ENCODE measurements at regions of chr1 and their contacts with region 1.

Region 1: DNA sequence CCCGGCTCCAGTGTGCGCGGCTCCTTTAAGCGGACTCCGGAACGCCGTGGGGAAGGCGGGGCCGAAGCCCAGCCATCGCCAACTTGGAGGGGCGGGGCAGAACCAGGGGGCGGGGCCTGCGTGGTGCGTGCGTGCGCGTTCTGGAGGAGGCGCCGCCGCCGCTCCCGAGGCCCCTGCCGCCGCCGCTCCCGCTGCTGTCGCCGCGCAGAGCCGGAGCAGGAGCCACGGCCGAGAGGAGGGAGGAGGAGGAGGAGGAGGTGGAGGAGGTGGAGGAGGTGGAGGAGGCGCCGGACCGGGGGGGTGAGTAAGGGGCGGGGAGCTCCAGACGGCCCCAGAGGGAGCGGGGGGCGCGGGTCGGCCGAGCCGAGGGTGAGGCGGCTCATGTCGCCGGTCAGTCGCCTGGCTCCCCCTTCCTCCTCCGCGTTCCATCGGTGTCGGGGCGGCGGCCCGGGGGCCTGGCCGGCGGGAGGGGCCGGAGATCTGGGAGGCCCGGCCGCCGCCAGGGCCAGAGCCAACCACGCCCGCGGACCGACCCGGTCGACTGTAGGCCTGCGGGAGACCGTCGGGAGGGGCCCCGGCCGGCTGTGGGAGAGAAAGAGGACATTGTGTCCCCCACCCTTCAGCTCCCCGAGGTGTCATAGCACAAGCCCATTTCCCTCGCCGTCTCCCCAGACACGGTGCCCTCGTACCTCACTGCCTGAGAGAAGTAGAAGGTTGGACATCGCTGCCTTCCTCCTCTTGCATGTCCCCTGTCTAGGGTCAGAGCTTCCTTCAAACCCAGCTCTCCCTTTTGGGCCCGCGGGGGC is at the start of gene RAP1A:
- DNase-seq: peak; percentile 97
- ATAC-seq: peak; percentile 79
- H3K4me3 Mint-ChIP-seq: peak within 1 kb of the TSS; percentile 99
- H3K27ac Mint-ChIP-seq: peak within 1 kb of the TSS; percentile 96
- H3K4me1 Mint-ChIP-seq: peaks cover 63% of the 10 kb centered on the region
- H3K27me3 Mint-ChIP-seq: no peaks in the 10 kb centered on the region
- CTCF ChIP-seq: no peak
- total RNA-seq, gene RAP1A: 197 to 198 TPM

Region 2: DNA sequence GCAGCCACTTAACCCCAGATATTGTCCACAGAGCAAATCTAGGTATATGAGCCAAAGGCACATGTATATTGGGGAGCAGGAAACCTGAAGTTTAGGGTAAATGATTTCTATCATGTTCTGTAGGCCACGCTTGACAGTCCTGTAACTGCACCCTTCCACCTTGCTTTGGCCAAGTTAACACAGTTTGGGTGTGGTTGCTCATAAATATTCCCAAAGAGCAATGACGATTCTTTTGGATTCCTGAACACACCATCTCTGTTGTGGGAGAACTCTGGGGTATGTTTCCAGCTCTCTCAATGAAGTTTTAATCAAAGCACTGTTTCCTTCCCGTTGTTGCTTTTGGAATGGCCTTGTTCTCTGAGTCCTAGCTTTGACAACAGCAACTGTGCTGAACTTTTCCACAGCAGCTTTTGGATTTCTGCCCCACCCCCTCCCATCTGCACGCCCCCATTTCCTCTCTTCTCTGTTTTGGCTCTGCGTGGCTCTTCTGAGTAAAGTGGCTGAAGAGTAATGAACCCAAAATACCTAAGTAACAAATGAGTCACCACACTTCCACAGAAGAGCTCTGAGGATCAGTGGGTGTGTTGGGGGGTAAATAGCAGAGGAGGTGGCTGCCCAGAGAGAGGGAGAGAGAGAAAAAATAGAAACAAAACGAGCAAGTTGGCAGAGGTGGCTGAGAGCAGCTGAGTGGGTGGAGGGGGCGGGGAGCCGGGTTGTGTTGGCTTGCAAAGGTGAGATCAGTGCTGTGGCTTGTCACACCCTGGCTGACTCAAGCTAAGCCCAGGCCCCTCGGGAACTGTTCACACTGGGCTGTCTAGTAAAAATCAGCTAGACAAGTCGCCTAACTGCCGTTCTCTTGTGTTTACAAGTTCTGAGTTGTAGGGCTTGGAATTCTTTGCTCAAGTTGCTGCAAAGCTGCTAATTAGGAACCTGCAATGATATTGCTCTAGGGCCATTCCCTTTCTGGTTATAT is 27.2 kb before region 1 on chr1:
- CTCF ChIA-PET with region 1: interaction called, 77 read pairs
- POLR2A ChIA-PET with region 1: interaction called, 176 read pairs
- intact Hi-C with region 1: loop called (anchors 2 kb)
- DNase-seq: peak; percentile 100
- ATAC-seq: peak; percentile 90
- H3K4me3 Mint-ChIP-seq: peak overlapping the region; percentile 57
- H3K27ac Mint-ChIP-seq: peak overlapping the region; percentile 91
- H3K4me1 Mint-ChIP-seq: peaks cover 76% of the 10 kb centered on the region
- H3K27me3 Mint-ChIP-seq: no peaks in the 10 kb centered on the region
- CTCF ChIP-seq: no peak

Region 3: DNA sequence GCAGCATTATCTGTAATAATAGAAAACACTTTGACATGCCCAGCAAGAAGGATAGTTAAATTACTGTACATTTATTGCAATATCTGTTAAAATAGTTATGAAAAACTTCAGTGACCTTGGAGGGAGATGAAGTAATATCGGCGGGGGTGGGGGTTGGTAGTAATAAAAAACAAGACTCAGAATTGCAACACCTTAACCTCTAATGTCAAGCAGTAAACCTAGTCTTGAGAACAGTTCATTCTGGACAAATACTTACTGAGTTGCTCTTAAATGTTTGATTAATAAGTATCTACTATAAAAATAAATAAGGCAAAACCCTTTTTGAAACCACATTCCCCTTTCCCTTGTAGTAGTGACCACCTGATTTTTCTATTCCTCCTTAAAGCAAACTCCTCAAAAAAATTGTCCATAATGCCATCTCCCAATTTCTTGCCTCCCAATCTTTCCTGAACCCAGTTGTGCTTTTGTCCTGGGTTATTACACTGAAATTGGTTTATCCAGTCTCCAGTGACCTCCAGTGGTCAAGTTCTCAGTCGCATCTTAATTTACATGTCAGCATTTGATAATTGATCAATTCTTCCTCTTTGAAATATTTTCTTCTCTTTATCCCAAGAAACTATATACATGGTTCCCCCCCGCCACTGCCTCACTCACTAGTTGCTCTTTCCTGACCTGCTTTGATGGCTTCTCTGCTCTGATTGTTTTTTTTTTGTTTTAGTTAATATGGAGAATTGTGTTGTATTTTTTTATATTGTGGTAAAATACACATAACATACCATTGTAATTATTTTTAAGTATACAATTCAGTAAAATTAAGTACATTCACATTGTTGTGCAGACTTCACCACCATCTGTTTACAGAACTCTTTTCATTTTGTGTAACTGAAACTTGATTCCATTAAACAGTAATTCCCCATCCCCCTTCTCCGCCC is 36.5 kb after region 1 on chr1:
- CTCF ChIA-PET with region 1: no interaction called
- POLR2A ChIA-PET with region 1: interaction called, 3 read pairs
- intact Hi-C with region 1: loop called (anchors 5 kb)
- DNase-seq: peak; percentile 27
- ATAC-seq: no peak
- H3K4me3 Mint-ChIP-seq: no peak overlapping the region
- H3K27ac Mint-ChIP-seq: no peak overlapping the region
- H3K4me1 Mint-ChIP-seq: peaks cover 53% of the 10 kb centered on the region
- H3K27me3 Mint-ChIP-seq: no peaks in the 10 kb centered on the region
- CTCF ChIP-seq: peak; percentile 56

Region 4: DNA sequence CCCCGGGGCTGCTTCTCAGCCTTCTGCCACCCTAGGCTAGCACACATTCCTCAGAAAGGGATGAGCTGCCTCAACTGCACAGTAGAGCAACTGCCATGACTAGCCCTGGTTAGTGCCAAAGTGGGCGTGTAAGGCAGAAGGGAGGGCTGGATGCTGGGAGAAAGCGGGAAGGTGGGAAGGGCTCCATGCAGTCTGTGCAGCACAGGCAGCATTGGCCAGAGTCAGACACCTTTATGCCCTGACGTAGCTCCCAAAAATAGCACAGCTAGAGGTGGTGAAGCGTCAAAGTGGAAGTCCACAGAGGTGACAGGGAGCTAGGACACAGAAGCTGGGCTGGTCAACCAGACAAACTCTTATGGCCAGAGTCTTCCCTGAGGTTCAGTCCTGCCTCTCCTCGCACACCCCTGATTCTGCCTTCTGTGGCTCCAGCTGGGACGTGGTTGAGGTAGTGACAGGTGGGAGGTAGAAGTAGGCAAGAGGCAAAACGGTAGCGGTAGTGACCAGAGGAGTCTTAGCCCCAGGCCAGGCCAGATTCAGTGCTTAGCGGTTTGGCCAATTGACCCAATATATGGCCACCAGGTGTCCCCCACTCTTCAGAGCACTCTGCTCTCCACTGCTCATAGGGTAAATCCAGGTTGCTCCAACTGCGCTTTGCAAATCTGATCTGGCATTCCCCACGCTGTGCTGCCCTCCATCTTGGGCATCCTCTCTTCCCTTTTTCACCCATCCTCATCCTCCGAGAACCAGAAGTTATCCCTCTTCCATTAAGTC is 181.4 kb after region 1 on chr1:
- CTCF ChIA-PET with region 1: no interaction called
- POLR2A ChIA-PET with region 1: no interaction called
- intact Hi-C with region 1: no loop called
- DNase-seq: no peak
- ATAC-seq: no peak
- H3K4me3 Mint-ChIP-seq: no peak overlapping the region
- H3K27ac Mint-ChIP-seq: no peak overlapping the region
- H3K4me1 Mint-ChIP-seq: no peaks in the 10 kb centered on the region
- H3K27me3 Mint-ChIP-seq: no peaks in the 10 kb centered on the region
- CTCF ChIP-seq: no peak

Measured in activated CD8-positive, alpha-beta T cell treated with anti-CD3 and anti-CD28 coated beads for 36 hours (primary cell).